ENCODE measurements at regions of chr11 and their contacts with region 1.

Region 1: DNA sequence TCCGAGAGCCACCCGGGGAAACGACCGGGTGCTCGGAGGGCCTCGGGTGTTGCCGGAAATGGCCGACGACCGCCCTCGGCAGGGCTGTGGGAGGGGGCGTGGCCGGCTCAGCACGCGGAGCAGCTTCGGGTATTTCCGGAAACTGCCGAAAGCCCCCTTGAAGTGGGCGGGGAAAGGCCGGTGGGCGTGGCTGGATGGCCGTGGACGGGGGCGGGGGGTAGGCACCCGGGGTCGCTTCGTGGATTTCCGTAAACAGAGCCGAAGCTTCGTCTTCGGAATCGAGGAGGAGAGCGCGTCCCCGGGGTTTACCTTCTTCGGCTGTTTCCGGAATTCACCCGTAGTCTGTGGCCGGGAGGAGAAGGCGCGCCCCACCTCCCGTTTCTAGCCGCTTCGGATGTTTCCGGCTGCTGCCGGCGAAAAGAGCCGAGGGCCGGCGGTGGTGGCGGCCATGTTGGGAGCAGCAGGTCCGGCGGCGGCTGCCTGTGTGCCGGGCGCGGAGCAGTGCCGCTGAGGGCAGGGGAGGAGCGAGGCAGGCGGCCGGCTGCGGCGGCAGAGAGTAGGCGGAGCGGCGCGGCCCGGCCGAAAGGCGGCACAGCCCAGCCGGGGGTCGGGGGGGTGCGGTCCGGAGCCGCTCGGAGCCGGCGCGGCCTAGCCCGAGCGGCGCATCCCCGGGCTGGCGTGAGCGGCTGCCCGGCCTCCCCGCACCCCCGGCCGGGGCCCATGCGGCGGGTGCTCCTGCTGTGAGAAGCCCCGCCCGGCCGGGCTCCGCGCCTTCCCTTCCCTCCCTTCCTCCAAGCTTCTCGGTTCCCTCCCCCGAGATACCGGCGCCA is at the start of gene MARK2:
- DNase-seq: peak; percentile 96
- H3K4me3 ChIP-seq: peak within 1 kb of the TSS; percentile 91
- H3K27ac ChIP-seq: peak within 1 kb of the TSS; percentile 39
- H3K27me3 ChIP-seq: no peaks in the 10 kb centered on the region
- CTCF ChIP-seq: no peak
- polyA plus RNA-seq, gene MARK2: 14.5 and 16.5 TPM in 2 replicates

Region 2: GRCh38 chr11:63802637-63803414 is 36.1 kb before region 1 on chr11:
- CTCF ChIA-PET with region 1: interaction called, 10 read pairs
- POLR2A ChIA-PET with region 1: interaction called, 11 read pairs
- DNase-seq: no peak
- H3K4me3 ChIP-seq: no peak overlapping the region
- H3K27ac ChIP-seq: no peak overlapping the region
- H3K27me3 ChIP-seq: no peaks in the 10 kb centered on the region
- CTCF ChIP-seq: no peak

Region 3: GRCh38 chr11:63855975-63856749 is 17.3 kb after region 1 on chr11:
- CTCF ChIA-PET with region 1: interaction called, 12 read pairs
- POLR2A ChIA-PET with region 1: no interaction called
- DNase-seq: no peak
- H3K4me3 ChIP-seq: no peak overlapping the region
- H3K27ac ChIP-seq: no peak overlapping the region
- H3K27me3 ChIP-seq: no peaks in the 10 kb centered on the region
- CTCF ChIP-seq: no peak

Region 4: DNA sequence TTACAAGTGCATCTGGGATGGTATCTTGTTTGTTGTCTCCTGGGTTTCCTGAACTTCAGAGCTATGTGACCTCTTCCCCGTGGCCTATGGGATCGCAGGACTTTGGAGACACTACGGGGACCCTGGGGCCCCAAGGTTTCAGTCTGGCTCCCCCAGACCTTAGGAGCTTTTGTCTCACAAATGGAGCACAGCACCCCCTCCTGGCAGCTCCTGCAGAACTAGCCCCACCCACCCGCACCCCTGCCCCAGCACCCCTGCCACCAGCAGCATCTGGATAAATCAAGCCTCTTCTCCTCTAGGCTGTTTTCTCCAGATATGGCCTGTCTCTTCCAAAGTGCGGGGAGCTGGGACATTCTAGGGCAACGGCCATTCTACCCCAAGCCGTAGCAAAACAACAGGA is 67.7 kb after region 1 on chr11:
- CTCF ChIA-PET with region 1: interaction called, 23 read pairs
- POLR2A ChIA-PET with region 1: no interaction called
- DNase-seq: no peak
- H3K4me3 ChIP-seq: no peak overlapping the region
- H3K27ac ChIP-seq: no peak overlapping the region
- H3K27me3 ChIP-seq: no peaks in the 10 kb centered on the region
- CTCF ChIP-seq: 0 out of 2 replicates have a peak, but pooled peaks have one; percentile 20

Region 5: GRCh38 chr11:63945477-63946163 is 106.7 kb after region 1 on chr11:
- CTCF ChIA-PET with region 1: interaction called, 256 read pairs
- POLR2A ChIA-PET with region 1: interaction called, 6 read pairs
- DNase-seq: peak; percentile 27
- H3K4me3 ChIP-seq: no peak overlapping the region
- H3K27ac ChIP-seq: peak overlapping the region; percentile 21
- H3K27me3 ChIP-seq: no peaks in the 10 kb centered on the region
- CTCF ChIP-seq: peak; percentile 69

Region 6: GRCh38 chr11:64152841-64153691 is 314.2 kb after region 1 on chr11:
- CTCF ChIA-PET with region 1: interaction called, 17 read pairs
- POLR2A ChIA-PET with region 1: no interaction called
- DNase-seq: no peak
- H3K4me3 ChIP-seq: no peak overlapping the region
- H3K27ac ChIP-seq: no peak overlapping the region
- H3K27me3 ChIP-seq: no peaks in the 10 kb centered on the region
- CTCF ChIP-seq: peak; percentile 97

Measured in AG04450 (cell line).